ENCODE measurements at regions of chr22 and their contacts with region 1.

Region 1: GRCh38 chr22:31290494-31291471 is 1.5 kb downstream of the PIK3IP1 start:
- DNase-seq: peak; percentile 95
- ATAC-seq: peak; percentile 88
- H3K4me3 Mint-ChIP-seq: peak overlapping the region; percentile 97
- H3K27ac Mint-ChIP-seq: peak overlapping the region; percentile 99
- H3K4me1 Mint-ChIP-seq: peaks cover 77% of the 10 kb centered on the region
- H3K27me3 Mint-ChIP-seq: no peaks in the 10 kb centered on the region

Region 2: DNA sequence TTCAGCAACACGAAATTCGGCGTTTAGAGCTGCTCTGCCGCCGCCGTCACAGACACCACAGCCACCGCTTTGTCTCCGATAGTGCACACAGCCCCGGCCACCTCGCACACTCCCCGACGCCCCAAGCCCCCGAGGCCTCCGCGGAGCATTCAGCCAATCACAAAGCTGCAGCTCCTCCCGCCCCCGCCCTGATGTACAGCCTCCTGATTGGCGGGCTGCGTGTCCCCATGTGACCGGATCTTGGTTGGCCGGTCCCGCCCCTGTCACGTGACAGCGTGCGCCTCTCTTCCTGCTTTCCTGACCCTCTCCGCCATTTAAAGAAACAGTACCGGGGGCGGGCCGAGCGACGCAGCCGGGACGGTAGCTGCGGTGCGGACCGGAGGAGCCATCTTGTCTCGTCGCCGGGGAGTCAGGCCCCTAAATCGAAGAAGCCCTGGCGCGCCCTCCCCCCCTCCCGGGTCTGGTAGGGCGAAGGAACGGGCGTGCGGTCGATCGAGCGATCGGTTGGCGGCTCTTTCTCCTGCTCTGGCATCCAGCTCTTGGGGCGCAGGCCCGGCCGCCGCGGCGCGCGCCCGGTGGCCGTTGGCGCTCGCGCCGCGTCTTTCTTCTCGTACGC is 321.8 kb before region 1 on chr22 and contains the start of gene TUG1:
- CTCF ChIA-PET with region 1: interaction called, 4 read pairs
- POLR2A ChIA-PET with region 1: interaction called, 11 read pairs
- DNase-seq: peak; percentile 98
- ATAC-seq: peak; percentile 93
- H3K4me3 Mint-ChIP-seq: peak within 1 kb of the TSS; percentile 89
- H3K27ac Mint-ChIP-seq: peak within 1 kb of the TSS; percentile 99
- H3K4me1 Mint-ChIP-seq: peaks cover 60% of the 10 kb centered on the region
- H3K27me3 Mint-ChIP-seq: no peaks in the 10 kb centered on the region
- total RNA-seq, gene TUG1: 67.3 to 72.3 TPM

Region 3: DNA sequence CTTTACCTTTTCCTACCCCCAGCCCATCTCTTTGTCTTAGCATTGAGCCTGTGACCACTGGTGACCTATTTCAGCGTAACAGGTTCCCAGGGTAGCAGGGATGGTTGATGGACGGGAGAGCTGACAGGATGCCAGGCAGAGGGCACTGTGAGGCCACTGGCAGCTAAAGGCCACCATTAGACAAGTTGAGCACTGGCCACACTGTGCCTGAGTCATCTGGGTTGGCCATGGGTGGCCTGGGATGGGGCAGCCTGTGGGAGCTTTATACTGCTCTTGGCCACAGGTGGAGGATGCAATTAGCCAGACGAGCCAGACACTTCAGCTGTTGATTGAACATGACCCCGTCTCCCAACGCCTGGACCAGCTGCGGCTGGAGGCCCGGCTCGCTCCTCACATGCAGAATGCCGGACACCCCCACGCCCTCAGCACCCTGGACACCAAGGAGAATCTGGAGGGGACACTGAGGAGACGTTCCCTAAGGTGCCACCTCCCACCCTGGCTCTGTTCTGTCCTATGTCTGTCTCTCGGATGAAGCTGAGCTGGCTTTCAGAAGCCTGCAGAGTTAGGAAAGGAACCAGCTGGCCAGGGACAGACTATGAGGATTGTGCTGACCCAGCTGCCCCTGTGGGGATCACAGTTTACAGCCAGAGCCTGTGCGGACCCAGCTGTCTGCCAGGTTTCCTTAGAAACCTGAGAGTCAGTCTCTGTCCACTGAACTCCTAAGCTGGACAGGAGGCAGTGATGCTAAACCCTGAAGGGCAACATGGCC is 28.3 kb before region 1 on chr22:
- CTCF ChIA-PET with region 1: no interaction called
- POLR2A ChIA-PET with region 1: no interaction called
- DNase-seq: no peak
- ATAC-seq: no peak
- H3K4me3 Mint-ChIP-seq: no peak overlapping the region
- H3K27ac Mint-ChIP-seq: no peak overlapping the region
- H3K4me1 Mint-ChIP-seq: no peaks in the 10 kb centered on the region
- H3K27me3 Mint-ChIP-seq: no peaks in the 10 kb centered on the region

Region 4: GRCh38 chr22:31278622-31279326 is 12.0 kb before region 1 on chr22:
- CTCF ChIA-PET with region 1: interaction called, 43 read pairs
- POLR2A ChIA-PET with region 1: interaction called, 99 read pairs
- DNase-seq: peak; percentile 38
- ATAC-seq: peak; percentile 48
- H3K4me3 Mint-ChIP-seq: no peak overlapping the region
- H3K27ac Mint-ChIP-seq: peak overlapping the region; percentile 80
- H3K4me1 Mint-ChIP-seq: peaks cover 29% of the 10 kb centered on the region
- H3K27me3 Mint-ChIP-seq: no peaks in the 10 kb centered on the region

Region 5: GRCh38 chr22:31308181-31308580 is 17.4 kb after region 1 on chr22:
- CTCF ChIA-PET with region 1: interaction called, 107 read pairs
- POLR2A ChIA-PET with region 1: interaction called, 35 read pairs
- DNase-seq: no peak
- ATAC-seq: no peak
- H3K4me3 Mint-ChIP-seq: no peak overlapping the region
- H3K27ac Mint-ChIP-seq: peak overlapping the region; percentile 66
- H3K4me1 Mint-ChIP-seq: peaks cover 21% of the 10 kb centered on the region
- H3K27me3 Mint-ChIP-seq: no peaks in the 10 kb centered on the region

Region 6: GRCh38 chr22:31345331-31346254 is 54.8 kb after region 1 on chr22:
- CTCF ChIA-PET with region 1: interaction called, 5 read pairs
- POLR2A ChIA-PET with region 1: interaction called, 43 read pairs
- DNase-seq: peak; percentile 89
- ATAC-seq: peak; percentile 59
- H3K4me3 Mint-ChIP-seq: peak overlapping the region; percentile 83
- H3K27ac Mint-ChIP-seq: peak overlapping the region; percentile 84
- H3K4me1 Mint-ChIP-seq: peaks cover 52% of the 10 kb centered on the region
- H3K27me3 Mint-ChIP-seq: no peaks in the 10 kb centered on the region